Endothelial cell of umbilical vein (primary cell): ENCODE measurements at regions of chr20 and their contacts with region 1.

Region 1: DNA sequence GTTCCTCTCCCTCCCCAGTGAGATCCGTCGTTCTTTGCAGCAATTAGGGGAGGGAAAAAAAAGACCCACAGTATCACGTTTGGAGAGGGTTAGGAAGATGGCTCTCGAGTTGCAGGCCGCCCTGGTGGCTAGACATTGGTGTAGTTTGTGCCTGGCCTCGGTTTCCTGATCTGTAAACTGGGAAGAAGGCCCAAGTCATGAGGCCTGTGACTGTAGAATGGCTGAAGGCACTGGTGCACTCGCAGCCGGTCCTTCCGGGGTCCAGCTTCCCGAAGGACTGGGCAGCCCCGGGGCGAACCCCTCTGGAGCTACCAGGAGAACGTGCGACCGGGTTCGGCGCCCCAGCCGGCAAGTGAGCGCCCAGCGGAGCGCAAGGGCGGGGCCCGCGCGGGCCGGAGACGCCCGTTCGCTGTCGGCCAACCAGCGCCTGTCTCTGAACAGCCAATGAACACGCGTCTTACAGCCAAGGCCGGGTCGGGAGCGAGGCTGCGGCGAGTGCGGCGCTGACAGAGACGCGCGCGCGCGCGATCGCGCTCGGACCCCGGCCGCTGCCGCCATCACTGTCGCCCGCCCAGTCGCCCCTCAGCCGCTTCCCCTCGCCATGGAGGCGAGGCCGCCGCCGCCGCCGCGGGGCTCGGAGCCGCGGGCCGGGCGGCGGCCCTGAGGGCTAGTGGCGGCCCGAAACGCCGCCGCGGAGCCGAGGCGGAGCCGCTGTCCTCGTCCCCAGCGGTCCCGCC is at the start of gene PTPRA:
- DNase-seq: peak; percentile 91
- H3K4me3 ChIP-seq: peak within 1 kb of the TSS; percentile 55 to 80 (median 64)
- H3K27ac ChIP-seq: peak within 1 kb of the TSS; percentile 65
- H3K4me1 ChIP-seq: peaks cover 35% of the 10 kb centered on the region
- H3K27me3 ChIP-seq: no peaks in the 10 kb centered on the region
- CTCF ChIP-seq: no peak
- POLR2A ChIP-seq: peak; percentile 99
- total RNA-seq, gene PTPRA: 52.2 and 53.4 TPM in 2 replicates

Region 2: GRCh38 chr20:2651772-2652723 is 221.1 kb before region 1 on chr20 and contains the start of gene NOP56:
- CTCF ChIA-PET with region 1: no interaction called
- POLR2A ChIA-PET with region 1: no interaction called
- dilution Hi-C with region 1: no loop called
- intact Hi-C with region 1: loop called (anchors 1 kb)
- DNase-seq: peak; percentile 86
- H3K4me3 ChIP-seq: peak within 1 kb of the TSS; percentile 94 to 98 (median 96)
- H3K27ac ChIP-seq: peak within 1 kb of the TSS; percentile 51
- H3K4me1 ChIP-seq: peaks cover 25% of the 10 kb centered on the region
- H3K27me3 ChIP-seq: no peaks in the 10 kb centered on the region
- CTCF ChIP-seq: no peak
- POLR2A ChIP-seq: peak; percentile 92
- total RNA-seq, gene NOP56: 305 and 329 TPM in 2 replicates

Region 3: DNA sequence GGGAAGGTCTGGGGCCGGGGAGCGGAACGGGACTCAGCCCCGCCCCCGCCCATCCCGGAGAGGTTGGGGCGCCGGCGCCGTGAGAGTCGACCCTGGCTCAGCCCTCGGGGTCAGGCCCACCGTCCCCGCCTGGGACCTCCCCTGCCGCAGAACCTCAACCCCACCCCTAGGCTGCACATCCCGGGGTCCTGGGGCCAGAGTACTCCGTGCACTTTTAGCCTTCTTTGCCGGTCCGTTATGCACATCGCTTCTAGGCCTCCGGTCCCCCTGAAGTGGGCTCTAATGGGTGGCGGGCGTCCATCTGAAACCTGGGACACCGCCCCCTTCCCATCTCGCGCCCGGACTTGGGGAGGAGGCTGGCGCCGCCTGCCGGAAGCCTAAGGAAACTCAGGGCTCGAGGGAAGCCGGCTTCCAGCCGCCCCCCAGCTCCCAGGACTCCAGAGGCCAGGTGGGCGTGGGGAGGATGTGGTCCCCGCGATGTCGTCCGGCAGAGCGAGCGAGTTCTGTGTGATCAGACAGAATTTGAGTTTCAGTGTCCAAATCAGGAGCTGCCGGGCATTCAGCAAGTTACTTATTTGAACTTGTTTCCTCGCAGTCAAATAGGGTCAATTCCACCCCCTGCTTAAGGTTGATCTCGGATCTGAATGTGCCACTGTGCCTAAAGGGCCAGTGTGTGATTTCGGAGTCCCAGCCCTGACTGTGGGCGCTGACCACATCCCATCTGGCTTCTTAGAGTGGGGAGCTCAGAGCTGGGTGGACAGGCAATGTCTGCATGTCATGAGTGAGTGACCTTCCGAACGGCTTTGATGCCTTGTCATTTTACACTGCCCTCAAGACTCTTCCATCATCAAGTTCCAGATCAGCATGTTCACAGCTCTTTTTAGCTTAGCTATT is 120.4 kb before region 1 on chr20:
- CTCF ChIA-PET with region 1: interaction called, 3 read pairs
- POLR2A ChIA-PET with region 1: no interaction called
- dilution Hi-C with region 1: no loop called
- intact Hi-C with region 1: loop called (anchors 5 kb)
- DNase-seq: peak; percentile 42
- H3K4me3 ChIP-seq: peak overlapping the region in 1 of 3 experiments; percentile 24
- H3K27ac ChIP-seq: no peak overlapping the region
- H3K4me1 ChIP-seq: peaks cover 17% of the 10 kb centered on the region
- H3K27me3 ChIP-seq: peaks cover 51 to 61% of the 10 kb centered on the region in 2 experiments
- CTCF ChIP-seq: peak; percentile 73 to 87
- POLR2A ChIP-seq: no peak

Region 4: GRCh38 chr20:2825761-2826160 is 47.4 kb before region 1 on chr20:
- CTCF ChIA-PET with region 1: no interaction called
- POLR2A ChIA-PET with region 1: no interaction called
- dilution Hi-C with region 1: no loop called
- intact Hi-C with region 1: no loop called
- DNase-seq: no peak
- H3K4me3 ChIP-seq: no peak overlapping the region
- H3K27ac ChIP-seq: no peak overlapping the region
- H3K4me1 ChIP-seq: no peaks in the 10 kb centered on the region
- H3K27me3 ChIP-seq: peaks cover 17 to 42% of the 10 kb centered on the region in 2 experiments
- CTCF ChIP-seq: no peak
- POLR2A ChIP-seq: no peak

Region 5: DNA sequence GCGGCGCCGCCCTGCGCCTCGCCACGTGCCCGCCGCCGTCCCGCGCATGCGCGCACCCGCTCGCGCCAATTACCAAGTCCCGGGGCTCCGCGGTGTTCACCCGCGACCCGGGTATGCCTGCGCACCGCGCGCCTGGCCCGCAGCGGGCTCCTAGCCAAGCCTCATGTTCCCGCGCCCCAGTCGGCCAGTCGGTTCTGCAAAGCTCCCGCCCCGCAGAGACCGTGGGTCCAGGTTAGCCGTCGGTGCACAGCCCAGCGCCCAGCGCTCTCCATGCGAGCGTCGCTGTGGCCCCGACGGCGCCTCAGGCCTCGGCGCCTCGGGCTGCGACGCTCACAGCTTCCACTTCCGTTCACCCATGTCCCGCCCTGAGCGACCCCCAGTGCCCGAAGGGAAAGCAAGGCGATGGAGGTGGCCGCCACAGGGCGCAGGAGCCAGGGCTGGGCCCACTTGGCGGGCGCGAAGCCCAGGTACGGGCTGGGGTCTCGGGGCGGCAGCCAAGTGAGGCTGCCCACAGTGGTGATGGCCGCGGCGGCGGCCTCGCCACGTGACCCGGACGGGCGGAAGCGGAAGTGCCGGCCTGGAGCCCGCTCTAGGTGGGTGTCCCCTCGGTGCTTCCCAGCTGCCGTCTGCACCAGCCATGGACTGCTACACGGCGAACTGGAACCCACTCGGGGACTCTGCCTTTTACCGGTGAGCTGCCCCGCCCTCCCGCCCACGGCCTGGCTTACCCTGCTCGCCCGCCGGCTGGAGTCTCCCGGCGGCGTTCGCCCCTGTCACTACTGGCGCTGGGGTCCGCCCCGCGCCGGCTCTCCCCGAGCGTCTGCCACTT is 32.8 kb before region 1 on chr20 and contains the starts of genes PCED1A and VPS16:
- CTCF ChIA-PET with region 1: no interaction called
- POLR2A ChIA-PET with region 1: interaction called, 4 read pairs
- dilution Hi-C with region 1: no loop called
- intact Hi-C with region 1: loop called (anchors 2 kb)
- DNase-seq: peak; percentile 79
- H3K4me3 ChIP-seq: peak within 1 kb of the TSS; percentile 80 to 92 (median 81)
- H3K27ac ChIP-seq: peak within 1 kb of the TSS; percentile 65
- H3K4me1 ChIP-seq: peaks cover 4% of the 10 kb centered on the region
- H3K27me3 ChIP-seq: no peaks in the 10 kb centered on the region
- CTCF ChIP-seq: no peak
- POLR2A ChIP-seq: peak; percentile 42
- total RNA-seq, gene PCED1A: 18.7 and 20.1 TPM in 2 replicates
- total RNA-seq, gene VPS16: 35.8 and 42.3 TPM in 2 replicates

Region 6: GRCh38 chr20:2984956-2985661 is 111.9 kb after region 1 on chr20:
- CTCF ChIA-PET with region 1: no interaction called
- POLR2A ChIA-PET with region 1: no interaction called
- dilution Hi-C with region 1: no loop called
- intact Hi-C with region 1: loop called (anchors 5 kb)
- DNase-seq: peak; percentile 8
- H3K4me3 ChIP-seq: no peak overlapping the region
- H3K27ac ChIP-seq: no peak overlapping the region
- H3K4me1 ChIP-seq: peaks cover 2% of the 10 kb centered on the region
- H3K27me3 ChIP-seq: no peaks in the 10 kb centered on the region
- CTCF ChIP-seq: no peak
- POLR2A ChIP-seq: no peak

Region 7: DNA sequence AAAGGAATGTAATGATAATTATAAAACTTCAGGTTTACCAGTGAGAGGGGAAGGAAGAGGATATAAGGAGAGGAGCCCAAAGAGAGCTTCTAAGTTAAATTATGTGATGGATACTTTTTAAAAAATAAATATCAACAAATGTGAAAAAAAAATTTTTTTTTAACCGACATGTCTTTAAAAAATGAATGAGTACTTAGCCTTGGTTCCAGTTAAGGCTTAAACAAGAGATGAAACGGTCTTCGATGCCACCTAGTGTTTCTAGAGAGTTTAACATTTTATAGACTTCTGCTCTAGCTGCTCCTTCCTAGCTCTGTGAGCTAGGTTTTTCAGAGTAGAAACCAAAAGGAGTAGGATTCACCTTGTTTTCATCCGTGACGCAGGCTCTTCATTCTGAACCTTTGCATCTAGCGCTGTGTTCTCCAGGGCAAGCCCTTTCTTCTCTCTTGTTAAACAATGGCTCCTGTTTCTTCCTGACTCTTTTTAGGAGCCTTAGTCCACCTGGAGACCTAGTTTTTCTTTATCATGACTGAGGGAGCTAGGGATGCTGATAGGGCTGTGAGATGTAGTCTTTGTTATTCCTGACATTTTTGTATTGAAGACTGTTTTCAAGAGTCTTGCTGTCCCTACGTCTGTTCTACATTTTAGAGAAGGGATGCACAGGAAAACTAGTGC is 127.8 kb after region 1 on chr20:
- CTCF ChIA-PET with region 1: no interaction called
- POLR2A ChIA-PET with region 1: no interaction called
- dilution Hi-C with region 1: no loop called
- intact Hi-C with region 1: loop called (anchors 5 kb)
- DNase-seq: peak; percentile 80
- H3K4me3 ChIP-seq: no peak overlapping the region
- H3K27ac ChIP-seq: no peak overlapping the region
- H3K4me1 ChIP-seq: no peaks in the 10 kb centered on the region
- H3K27me3 ChIP-seq: no peaks in the 10 kb centered on the region
- CTCF ChIP-seq: peak; percentile 15 to 43
- POLR2A ChIP-seq: no peak

Region 8: GRCh38 chr20:3045816-3046676 is 172.9 kb after region 1 on chr20 and contains the start of gene MRPS26:
- CTCF ChIA-PET with region 1: no interaction called
- POLR2A ChIA-PET with region 1: no interaction called
- dilution Hi-C with region 1: no loop called
- intact Hi-C with region 1: loop called (anchors 5 kb)
- DNase-seq: peak; percentile 87
- H3K4me3 ChIP-seq: peak within 1 kb of the TSS; percentile 58 to 93 (median 63)
- H3K27ac ChIP-seq: no peak within 1 kb of the TSS
- H3K4me1 ChIP-seq: peaks cover 13% of the 10 kb centered on the region
- H3K27me3 ChIP-seq: no peaks in the 10 kb centered on the region
- CTCF ChIP-seq: no peak
- POLR2A ChIP-seq: peak; percentile 66
- total RNA-seq, gene MRPS26: 41.2 and 43.9 TPM in 2 replicates